ENCODE measurements at regions of chr20 and their contacts with region 1.

Region 1: DNA sequence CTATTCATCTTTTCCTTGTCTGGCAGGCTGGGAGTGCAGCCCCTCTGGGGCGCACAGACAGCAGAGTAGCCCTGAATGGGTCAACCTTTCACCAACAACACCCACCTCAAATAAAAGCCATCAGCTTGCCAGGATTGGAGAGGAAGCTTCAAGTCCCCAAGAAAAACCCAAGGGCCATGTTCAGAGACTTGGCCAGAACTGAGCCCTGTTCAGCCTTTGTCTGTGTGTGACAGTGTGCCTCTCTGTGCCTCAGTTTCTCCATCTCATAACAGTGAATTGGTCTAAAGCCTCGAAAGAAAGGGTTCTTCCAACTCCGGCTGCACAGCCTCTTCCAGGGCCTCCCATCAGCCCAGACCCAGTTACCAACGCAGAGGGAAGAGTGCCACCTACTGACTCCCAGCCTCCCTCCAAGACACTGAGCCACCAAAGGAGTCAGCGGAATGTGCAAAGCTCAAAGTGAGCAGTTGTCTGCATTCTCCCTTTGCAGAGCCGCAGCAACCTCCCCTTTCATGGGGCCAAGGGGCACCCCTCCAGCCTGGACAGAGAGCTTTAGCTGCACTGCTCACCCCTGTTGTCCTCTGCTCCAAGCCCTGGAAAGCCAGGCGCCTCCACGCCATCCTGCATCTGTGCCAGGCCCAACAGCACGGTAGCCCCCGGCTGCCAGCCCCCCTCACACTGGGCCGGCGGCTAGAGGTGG is 82.7 kb upstream of the TOP1 start:
- DNase-seq: peak; percentile 28 to 78 (median 71)
- H3K4me3 ChIP-seq: no peak overlapping the region
- H3K27ac ChIP-seq: no peak overlapping the region
- H3K27me3 ChIP-seq: peaks cover 0 to 21% (median 4%) of the 10 kb centered on the region in 45 donors
- CTCF ChIP-seq: peak in 54 of 56 donors; percentile 45 to 79 (median 64)

Region 2: GRCh38 chr20:40160097-40160550 is 785.8 kb before region 1 on chr20:
- intact Hi-C with region 1: loop called in 1 of 2 experiments (anchors 5 kb)
- DNase-seq: peak in 4 of 10 donors; percentile 13 to 49 (median 41)
- H3K4me3 ChIP-seq: no peak overlapping the region
- H3K27ac ChIP-seq: no peak overlapping the region
- H3K27me3 ChIP-seq: peaks cover 0 to 3% (median 0%) of the 10 kb centered on the region in 45 donors
- CTCF ChIP-seq: peak; percentile 24 to 81 (median 64)

Region 3: GRCh38 chr20:40741507-40742106 is 204.3 kb before region 1 on chr20:
- intact Hi-C with region 1: loop called in 1 of 2 experiments (anchors 10 kb)
- DNase-seq: peak in 1 of 10 donors; percentile 25
- H3K4me3 ChIP-seq: no peak overlapping the region
- H3K27ac ChIP-seq: no peak overlapping the region
- H3K27me3 ChIP-seq: peaks cover 0 to 34% (median 7%) of the 10 kb centered on the region in 45 donors
- CTCF ChIP-seq: peak in 53 of 56 donors; percentile 13 to 68 (median 52)